ENCODE measurements at regions of chr15 and their contacts with region 1.

Region 1: DNA sequence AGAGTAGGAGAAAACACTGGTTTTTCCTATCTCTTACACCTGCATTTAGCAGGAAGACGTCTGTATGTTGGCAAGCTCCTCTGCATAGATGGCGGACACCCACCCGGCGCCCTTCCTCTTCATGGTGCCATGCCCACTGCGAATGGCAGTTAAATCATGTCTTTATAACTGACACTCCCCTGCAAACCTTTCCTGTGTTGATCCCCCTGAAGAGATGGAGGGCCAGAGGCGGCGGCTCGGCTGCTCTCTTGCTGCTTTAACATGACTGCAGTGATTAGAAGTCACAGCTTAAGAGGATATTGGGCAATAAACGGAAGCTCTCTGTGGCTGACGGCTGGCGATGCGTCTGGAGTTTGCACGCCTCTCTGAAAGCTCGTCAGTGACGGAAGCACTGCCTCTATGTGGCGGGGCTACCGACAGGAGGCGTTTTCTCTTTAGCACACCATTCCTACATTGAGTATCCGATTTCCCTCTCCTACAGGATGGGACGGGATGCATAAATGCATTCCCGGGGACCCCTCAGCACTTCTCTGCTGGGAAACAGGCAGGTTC is 25.5 kb upstream of the SNRPA1 start:
- DNase-seq: peak; percentile 84
- H3K4me3 Mint-ChIP-seq: peak overlapping the region; percentile 69
- H3K27ac Mint-ChIP-seq: peak overlapping the region; percentile 83
- H3K4me1 Mint-ChIP-seq: peaks cover 16% of the 10 kb centered on the region
- H3K27me3 Mint-ChIP-seq: peaks cover 1% of the 10 kb centered on the region

Region 2: GRCh38 chr15:101288908-101289513 is 31.6 kb before region 1 on chr15:
- CTCF ChIA-PET with region 1: interaction called, 29 read pairs
- POLR2A ChIA-PET with region 1: interaction called, 36 read pairs
- DNase-seq: no peak
- H3K4me3 Mint-ChIP-seq: no peak overlapping the region
- H3K27ac Mint-ChIP-seq: peak overlapping the region; percentile 16
- H3K4me1 Mint-ChIP-seq: peaks cover 55% of the 10 kb centered on the region
- H3K27me3 Mint-ChIP-seq: no peaks in the 10 kb centered on the region

Region 3: GRCh38 chr15:101305820-101306255 is 14.7 kb before region 1 on chr15:
- CTCF ChIA-PET with region 1: interaction called, 26 read pairs
- POLR2A ChIA-PET with region 1: interaction called, 6 read pairs
- DNase-seq: no peak
- H3K4me3 Mint-ChIP-seq: no peak overlapping the region
- H3K27ac Mint-ChIP-seq: no peak overlapping the region
- H3K4me1 Mint-ChIP-seq: no peaks in the 10 kb centered on the region
- H3K27me3 Mint-ChIP-seq: no peaks in the 10 kb centered on the region

Region 4: GRCh38 chr15:101333401-101333800 is 12.8 kb after region 1 on chr15:
- CTCF ChIA-PET with region 1: interaction called, 30 read pairs
- POLR2A ChIA-PET with region 1: interaction called, 8 read pairs
- DNase-seq: no peak
- H3K4me3 Mint-ChIP-seq: no peak overlapping the region
- H3K27ac Mint-ChIP-seq: peak overlapping the region; percentile 91
- H3K4me1 Mint-ChIP-seq: peaks cover 17% of the 10 kb centered on the region
- H3K27me3 Mint-ChIP-seq: peaks cover 9% of the 10 kb centered on the region

Region 5: DNA sequence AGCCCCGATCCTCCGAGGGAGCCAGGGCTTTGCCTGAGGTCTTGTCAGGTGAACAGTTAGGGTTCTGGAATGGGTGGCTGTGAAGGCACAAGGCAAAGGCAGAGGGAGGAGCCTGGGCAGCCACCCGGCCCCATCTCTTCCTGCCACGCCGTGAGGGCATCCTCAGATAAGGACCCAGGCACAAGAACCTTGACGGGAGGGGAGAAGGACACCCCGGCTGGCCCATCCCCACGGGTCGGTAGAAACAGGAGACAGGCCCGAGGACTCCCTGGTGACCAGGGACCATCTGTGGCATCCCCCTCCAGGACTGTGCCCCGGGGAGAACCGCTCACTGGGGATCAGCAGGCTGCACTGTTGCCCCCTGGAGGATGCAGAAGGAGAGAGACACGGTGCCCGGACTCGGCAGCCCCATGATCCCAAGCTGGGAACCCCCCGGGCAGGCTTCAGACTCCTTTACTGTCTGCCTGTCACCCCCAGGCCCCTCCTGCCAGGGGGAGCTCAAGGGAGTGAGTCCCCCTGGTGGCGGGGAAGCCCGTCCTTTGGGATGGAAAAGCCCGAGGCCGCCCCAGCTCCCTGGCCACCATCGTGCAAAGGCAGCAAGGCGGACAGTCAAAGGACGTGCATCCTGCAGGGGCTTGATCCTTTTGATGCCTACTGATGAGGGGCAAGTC is 181.3 kb after region 1 on chr15:
- CTCF ChIA-PET with region 1: interaction called, 15 read pairs
- POLR2A ChIA-PET with region 1: no interaction called
- DNase-seq: peak; percentile 55
- H3K4me3 Mint-ChIP-seq: peak overlapping the region; percentile 40
- H3K27ac Mint-ChIP-seq: no peak overlapping the region
- H3K4me1 Mint-ChIP-seq: peaks cover 44% of the 10 kb centered on the region
- H3K27me3 Mint-ChIP-seq: peaks cover 16% of the 10 kb centered on the region